Mammary epithelial cell (primary cell): ENCODE measurements at regions of chr16 and their contacts with region 1.

Region 1: GRCh38 chr16:24988593-24989338 is 26.4 kb downstream of the ARHGAP17 start:
- DNase-seq: peak; percentile 82
- H3K4me3 ChIP-seq: no peak overlapping the region
- H3K27ac ChIP-seq: peak overlapping the region; percentile 4
- H3K4me1 ChIP-seq: peaks cover 40% of the 10 kb centered on the region
- H3K27me3 ChIP-seq: no peaks in the 10 kb centered on the region
- CTCF ChIP-seq: no peak

Region 2: GRCh38 chr16:25027781-25028180 is 39.0 kb after region 1 on chr16:
- CTCF ChIA-PET with region 1: no interaction called
- dilution Hi-C with region 1: no loop called
- in situ Hi-C with region 1: no loop called
- intact Hi-C with region 1: loop called (anchors 5 kb)
- DNase-seq: no peak
- H3K4me3 ChIP-seq: no peak overlapping the region
- H3K27ac ChIP-seq: no peak overlapping the region
- H3K4me1 ChIP-seq: peaks cover 13% of the 10 kb centered on the region
- H3K27me3 ChIP-seq: no peaks in the 10 kb centered on the region
- CTCF ChIP-seq: no peak

Region 3: GRCh38 chr16:25045696-25046381 is 57.1 kb after region 1 on chr16:
- CTCF ChIA-PET with region 1: no interaction called
- dilution Hi-C with region 1: no loop called
- in situ Hi-C with region 1: no loop called
- intact Hi-C with region 1: loop called (anchors 5 kb)
- DNase-seq: peak; percentile 53
- H3K4me3 ChIP-seq: no peak overlapping the region
- H3K27ac ChIP-seq: no peak overlapping the region
- H3K4me1 ChIP-seq: peaks cover 16% of the 10 kb centered on the region
- H3K27me3 ChIP-seq: no peaks in the 10 kb centered on the region
- CTCF ChIP-seq: no peak